ENCODE measurements at regions of chr2 and their contacts with region 1.

Region 1: DNA sequence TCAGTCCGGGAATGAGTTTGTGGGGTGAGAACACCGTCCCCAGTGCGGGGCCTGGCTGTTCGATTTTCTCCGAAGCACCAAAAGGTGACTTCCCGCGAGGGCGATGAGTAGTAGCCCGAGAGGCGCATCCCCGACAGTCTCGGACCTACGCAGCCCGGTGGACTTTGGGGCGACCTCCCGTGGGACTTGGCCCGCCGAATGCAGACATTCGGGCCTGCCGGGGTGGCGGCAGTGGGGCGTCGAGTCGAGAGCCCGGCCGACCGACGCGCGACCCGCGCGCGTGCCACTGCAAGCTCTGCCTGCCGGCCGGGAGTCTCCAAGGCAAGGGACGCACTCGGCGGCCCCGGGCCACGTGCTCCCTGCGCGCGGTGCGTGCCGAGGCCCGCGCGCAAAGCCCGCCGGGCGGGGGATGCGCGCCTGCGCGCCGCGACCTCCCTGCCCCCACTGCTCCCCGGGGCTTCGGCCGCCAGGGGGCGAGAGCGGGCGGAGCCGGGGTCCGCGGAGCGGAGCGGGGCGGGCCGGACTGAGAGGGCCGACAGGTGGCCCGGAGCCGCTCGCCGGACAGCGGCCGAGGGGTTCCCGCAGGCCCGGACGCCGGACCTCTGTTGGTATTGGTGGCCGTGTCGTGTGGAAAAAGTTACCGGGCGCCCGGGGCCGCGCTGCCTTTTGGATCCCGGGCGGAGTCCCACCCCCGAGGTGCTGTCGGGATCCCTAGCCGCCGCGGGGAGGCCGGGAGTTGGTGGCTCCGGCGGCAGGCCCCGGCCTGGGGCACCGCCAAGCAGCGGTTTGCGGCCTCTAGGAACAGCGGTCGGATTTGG is 1.9 kb downstream of the PTMA start:
- DNase-seq: peak; percentile 82 to 93 (median 86)
- H3K4me3 ChIP-seq: peak overlapping the region; percentile 66 to 97 (median 86)
- H3K27ac ChIP-seq: peak overlapping the region; percentile 96 to 100 (median 97)
- H3K4me1 ChIP-seq: peaks cover 24 to 46% of the 10 kb centered on the region in 2 donors
- H3K27me3 ChIP-seq: no peaks in the 10 kb centered on the region
- CTCF ChIP-seq: peak in 5 of 6 experiments; percentile 10 to 100 (median 92)
- POLR2A ChIP-seq: peak; percentile 88 to 92

Region 2: DNA sequence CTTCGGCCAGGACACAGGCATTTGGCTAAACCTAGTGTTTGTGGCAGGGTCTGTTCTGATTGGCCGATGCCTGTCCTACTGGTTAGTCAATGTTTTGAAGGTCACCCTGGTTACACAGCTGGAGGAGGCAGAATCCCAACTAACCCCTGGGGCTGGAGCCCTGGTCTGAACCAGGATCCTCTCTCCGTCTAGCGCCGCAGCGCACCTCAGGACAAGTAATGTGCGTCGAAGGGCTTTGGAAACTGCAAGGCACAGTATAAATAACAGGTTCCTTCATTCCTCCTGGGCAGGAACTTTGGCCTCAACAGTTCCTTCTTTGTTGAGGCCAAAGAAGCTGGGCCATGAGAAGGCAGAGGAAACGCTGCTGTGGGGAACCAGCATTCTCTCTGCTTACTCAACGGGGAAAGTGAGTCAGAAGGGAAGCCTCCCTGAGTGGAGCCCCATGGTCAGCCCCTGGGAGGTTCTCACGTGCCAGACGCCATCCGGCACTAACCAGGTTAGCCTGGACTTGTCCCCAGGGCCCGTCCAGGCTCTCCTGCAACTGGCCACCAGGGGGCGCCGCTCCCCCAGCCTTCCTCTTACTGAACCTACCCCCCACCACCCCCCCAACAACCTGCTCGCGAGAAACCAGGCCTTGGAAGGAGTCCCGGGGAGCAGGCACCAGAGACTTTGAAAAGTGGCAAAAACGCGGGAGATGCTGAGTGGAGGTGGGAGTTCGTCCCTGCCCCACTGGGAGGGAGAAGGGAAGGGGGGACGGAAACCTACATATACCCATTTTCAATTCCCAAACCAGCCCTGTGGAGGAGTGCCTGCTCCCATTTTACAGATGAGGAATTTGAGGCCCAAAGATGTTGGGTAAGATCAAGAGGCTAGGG is 97.8 kb before region 1 on chr2:
- intact Hi-C with region 1: loop called (anchors 2 to 5 kb)
- DNase-seq: peak; percentile 94 to 98 (median 96)
- H3K4me3 ChIP-seq: no peak overlapping the region
- H3K27ac ChIP-seq: peak overlapping the region; percentile 62 to 99 (median 99)
- H3K4me1 ChIP-seq: peaks cover 33 to 39% of the 10 kb centered on the region in 2 donors
- H3K27me3 ChIP-seq: no peaks in the 10 kb centered on the region
- CTCF ChIP-seq: peak; percentile 94 to 99 (median 98)
- POLR2A ChIP-seq: peak in 1 of 2 donors; percentile 8

Region 3: GRCh38 chr2:231677632-231678104 is 32.5 kb before region 1 on chr2:
- intact Hi-C with region 1: loop called (anchors 2 kb)
- DNase-seq: peak; percentile 73 to 97 (median 89)
- H3K4me3 ChIP-seq: no peak overlapping the region
- H3K27ac ChIP-seq: no peak overlapping the region
- H3K4me1 ChIP-seq: peaks cover 13 to 16% of the 10 kb centered on the region in 2 donors
- H3K27me3 ChIP-seq: no peaks in the 10 kb centered on the region
- CTCF ChIP-seq: peak; percentile 91 to 99 (median 99)
- POLR2A ChIP-seq: no peak

Measured in adrenal gland (tissue), 19 donors.